Activated CD8-positive, alpha-beta T cell treated with anti-CD3 and anti-CD28 coated beads for 36 hours (primary cell): ENCODE measurements at regions of chr12 and their contacts with region 1.

Region 1: DNA sequence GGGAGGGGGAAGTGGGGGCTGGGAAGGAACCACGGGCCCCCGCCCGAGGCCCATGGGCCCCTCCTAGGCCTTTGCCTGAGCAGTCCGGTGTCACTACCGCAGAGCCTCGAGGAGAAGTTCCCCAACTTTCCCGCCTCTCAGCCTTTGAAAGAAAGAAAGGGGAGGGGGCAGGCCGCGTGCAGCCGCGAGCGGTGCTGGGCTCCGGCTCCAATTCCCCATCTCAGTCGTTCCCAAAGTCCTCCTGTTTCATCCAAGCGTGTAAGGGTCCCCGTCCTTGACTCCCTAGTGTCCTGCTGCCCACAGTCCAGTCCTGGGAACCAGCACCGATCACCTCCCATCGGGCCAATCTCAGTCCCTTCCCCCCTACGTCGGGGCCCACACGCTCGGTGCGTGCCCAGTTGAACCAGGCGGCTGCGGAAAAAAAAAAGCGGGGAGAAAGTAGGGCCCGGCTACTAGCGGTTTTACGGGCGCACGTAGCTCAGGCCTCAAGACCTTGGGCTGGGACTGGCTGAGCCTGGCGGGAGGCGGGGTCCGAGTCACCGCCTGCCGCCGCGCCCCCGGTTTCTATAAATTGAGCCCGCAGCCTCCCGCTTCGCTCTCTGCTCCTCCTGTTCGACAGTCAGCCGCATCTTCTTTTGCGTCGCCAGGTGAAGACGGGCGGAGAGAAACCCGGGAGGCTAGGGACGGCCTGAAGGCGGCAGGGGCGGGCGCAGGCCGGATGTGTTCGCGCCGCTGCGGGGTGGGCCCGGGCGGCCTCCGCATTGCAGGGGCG is at the start of gene GAPDH:
- DNase-seq: peak; percentile 94
- ATAC-seq: peak; percentile 55
- H3K4me3 Mint-ChIP-seq: peak within 1 kb of the TSS; percentile 93
- H3K27ac Mint-ChIP-seq: peak within 1 kb of the TSS; percentile 99
- H3K4me1 Mint-ChIP-seq: peaks cover 37% of the 10 kb centered on the region
- H3K27me3 Mint-ChIP-seq: no peaks in the 10 kb centered on the region
- CTCF ChIP-seq: no peak
- total RNA-seq, gene GAPDH: 9,109 to 9,234 TPM

Region 2: GRCh38 chr12:6423267-6424007 is 110.7 kb before region 1 on chr12:
- CTCF ChIA-PET with region 1: interaction called, 56 read pairs
- POLR2A ChIA-PET with region 1: interaction called, 58 read pairs
- intact Hi-C with region 1: loop called (anchors 5 kb)
- DNase-seq: peak; percentile 87
- ATAC-seq: peak; percentile 55
- H3K4me3 Mint-ChIP-seq: peak overlapping the region; percentile 50
- H3K27ac Mint-ChIP-seq: peak overlapping the region; percentile 93
- H3K4me1 Mint-ChIP-seq: peaks cover 46% of the 10 kb centered on the region
- H3K27me3 Mint-ChIP-seq: no peaks in the 10 kb centered on the region
- CTCF ChIP-seq: peak; percentile 80

Region 3: DNA sequence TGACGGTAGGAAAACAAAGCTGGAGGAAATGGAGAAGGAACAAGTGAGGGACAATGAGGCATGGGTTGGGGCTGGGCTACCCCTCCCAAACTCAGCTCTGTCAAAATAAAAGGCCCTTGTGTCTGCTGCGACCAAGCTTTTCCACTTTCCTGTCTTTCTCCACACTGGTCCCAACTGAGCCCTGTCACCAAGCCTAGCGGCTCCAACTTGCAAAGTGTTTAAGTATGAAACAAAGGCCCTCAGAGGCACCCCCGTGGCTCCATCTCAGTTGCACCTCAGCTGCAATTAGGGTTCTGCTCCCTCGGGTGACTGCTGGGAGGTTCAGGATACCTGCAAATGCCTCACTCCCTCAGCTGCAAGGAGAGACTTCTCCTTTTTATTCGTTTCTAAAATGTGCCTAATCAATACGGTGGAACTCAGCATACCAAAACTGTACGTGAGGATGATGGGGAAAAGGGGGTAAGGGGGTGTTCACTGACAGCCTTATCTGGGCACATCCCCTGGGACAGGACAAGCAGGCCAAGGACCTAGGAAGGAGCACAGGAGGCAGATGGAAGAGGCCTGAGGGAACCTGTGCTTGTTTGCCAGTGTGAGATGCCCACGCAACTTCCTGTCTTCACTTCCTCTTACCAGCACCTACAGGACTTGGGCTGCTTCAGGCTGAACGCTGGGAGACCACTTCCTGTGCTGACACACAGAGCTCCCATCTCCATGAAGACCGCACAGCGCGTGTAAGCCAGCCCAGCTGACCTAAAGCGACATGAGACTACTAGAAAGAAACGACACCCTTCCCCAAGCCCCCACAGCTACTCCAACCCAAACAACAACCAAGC is 72.5 kb before region 1 on chr12:
- CTCF ChIA-PET with region 1: interaction called, 19 read pairs
- POLR2A ChIA-PET with region 1: interaction called, 81 read pairs
- intact Hi-C with region 1: no loop called
- DNase-seq: peak; percentile 96
- ATAC-seq: peak; percentile 81
- H3K4me3 Mint-ChIP-seq: peak overlapping the region; percentile 76
- H3K27ac Mint-ChIP-seq: peak overlapping the region; percentile 97
- H3K4me1 Mint-ChIP-seq: peaks cover 83% of the 10 kb centered on the region
- H3K27me3 Mint-ChIP-seq: no peaks in the 10 kb centered on the region
- CTCF ChIP-seq: no peak

Region 4: DNA sequence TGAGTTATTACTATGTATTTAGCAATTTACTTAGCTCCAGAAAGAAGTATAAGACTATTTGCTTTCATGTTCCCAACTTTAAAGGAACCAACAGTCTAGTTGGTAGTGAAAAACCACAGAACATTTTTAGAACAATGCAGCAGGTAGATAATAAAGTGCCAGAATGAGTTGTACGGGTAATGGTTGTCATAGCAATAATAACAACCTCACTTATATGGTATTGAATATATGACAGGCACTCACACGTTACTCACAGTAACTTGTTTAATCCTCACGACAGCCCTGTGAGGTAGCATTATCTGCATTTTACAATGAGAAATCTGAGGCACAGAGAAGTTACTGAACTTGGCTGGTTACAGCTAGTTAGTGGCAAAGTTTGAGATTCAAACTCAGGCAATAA is 10.4 kb before region 1 on chr12:
- CTCF ChIA-PET with region 1: interaction called, 13 read pairs
- POLR2A ChIA-PET with region 1: interaction called, 17 read pairs
- intact Hi-C with region 1: no loop called
- DNase-seq: no peak
- ATAC-seq: no peak
- H3K4me3 Mint-ChIP-seq: no peak overlapping the region
- H3K27ac Mint-ChIP-seq: no peak overlapping the region
- H3K4me1 Mint-ChIP-seq: no peaks in the 10 kb centered on the region
- H3K27me3 Mint-ChIP-seq: no peaks in the 10 kb centered on the region
- CTCF ChIP-seq: no peak

Region 5: DNA sequence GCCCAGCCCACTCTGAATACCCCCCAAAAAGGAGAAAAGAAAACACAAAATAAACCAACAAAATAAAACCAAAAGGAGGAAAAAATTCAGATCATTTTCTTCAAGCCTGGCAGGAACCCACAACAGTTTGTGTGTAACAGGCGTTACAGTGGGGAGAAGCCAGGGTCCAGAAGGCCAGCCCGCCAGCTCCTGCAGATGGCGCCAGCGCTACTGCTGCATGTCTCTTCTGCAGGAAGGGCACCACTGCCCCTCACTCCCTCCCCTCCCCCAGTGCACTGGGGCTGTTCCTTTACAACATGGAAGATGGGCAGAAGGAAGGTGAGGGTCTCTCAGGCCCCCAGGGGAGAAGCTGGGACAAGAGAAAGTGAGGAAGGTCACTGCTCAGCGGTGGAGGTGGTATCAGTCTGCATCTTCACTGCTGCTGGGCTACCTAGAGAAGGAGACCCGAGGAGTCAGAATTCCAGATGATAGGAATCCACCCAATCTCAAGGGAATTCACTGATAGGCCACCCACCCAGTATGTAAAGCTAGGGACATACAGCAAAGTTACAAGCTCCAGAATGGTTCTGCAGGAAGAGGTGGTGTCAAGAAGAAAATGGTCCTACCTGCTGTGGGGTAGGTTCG is 36.3 kb after region 1 on chr12:
- CTCF ChIA-PET with region 1: interaction called, 6 read pairs
- POLR2A ChIA-PET with region 1: interaction called, 26 read pairs
- intact Hi-C with region 1: no loop called
- DNase-seq: peak; percentile 73
- ATAC-seq: peak; percentile 29
- H3K4me3 Mint-ChIP-seq: no peak overlapping the region
- H3K27ac Mint-ChIP-seq: peak overlapping the region; percentile 10
- H3K4me1 Mint-ChIP-seq: peaks cover 44% of the 10 kb centered on the region
- H3K27me3 Mint-ChIP-seq: no peaks in the 10 kb centered on the region
- CTCF ChIP-seq: peak; percentile 76